ENCODE measurements at regions of chr6 and their contacts with region 1.

Region 1: GRCh38 chr6:3977875-3978711 is 100.8 kb downstream of the FAM217A start:
- DNase-seq: no peak
- H3K4me3 ChIP-seq: no peak overlapping the region
- H3K27ac ChIP-seq: no peak overlapping the region
- H3K4me1 ChIP-seq: peaks cover 0 to 1% (median 0%) of the 10 kb centered on the region in 4 experiments; a peak in 1 of 7 replicates
- H3K27me3 ChIP-seq: no peaks in the 10 kb centered on the region
- CTCF ChIP-seq: peak; percentile 25 to 65 (median 51)
- EP300 ChIP-seq: no peak
- POLR2A ChIP-seq: no peak
- RAD21 ChIP-seq: peak; percentile 60 to 63

Region 2: GRCh38 chr6:3742426-3743344 is 235.4 kb before region 1 on chr6:
- CTCF ChIA-PET with region 1: interaction called, 82 read pairs
- POLR2A ChIA-PET with region 1: interaction called, 3 read pairs
- DNase-seq: peak; percentile 60 to 98
- H3K4me3 ChIP-seq: no peak overlapping the region
- H3K27ac ChIP-seq: no peak overlapping the region
- H3K4me1 ChIP-seq: peaks cover 0 to 9% (median 4%) of the 10 kb centered on the region in 4 experiments; a peak in 5 of 7 replicates
- H3K27me3 ChIP-seq: peaks cover 0 to 2% (median 0%) of the 10 kb centered on the region in 4 experiments; a peak in 1 of 7 replicates
- CTCF ChIP-seq: peak in 2 of 3 experiments; percentile 91 to 94; a peak in 3 of 4 replicates
- EP300 ChIP-seq: no peak
- POLR2A ChIP-seq: no peak
- RAD21 ChIP-seq: peak; percentile 96 to 97

Region 3: DNA sequence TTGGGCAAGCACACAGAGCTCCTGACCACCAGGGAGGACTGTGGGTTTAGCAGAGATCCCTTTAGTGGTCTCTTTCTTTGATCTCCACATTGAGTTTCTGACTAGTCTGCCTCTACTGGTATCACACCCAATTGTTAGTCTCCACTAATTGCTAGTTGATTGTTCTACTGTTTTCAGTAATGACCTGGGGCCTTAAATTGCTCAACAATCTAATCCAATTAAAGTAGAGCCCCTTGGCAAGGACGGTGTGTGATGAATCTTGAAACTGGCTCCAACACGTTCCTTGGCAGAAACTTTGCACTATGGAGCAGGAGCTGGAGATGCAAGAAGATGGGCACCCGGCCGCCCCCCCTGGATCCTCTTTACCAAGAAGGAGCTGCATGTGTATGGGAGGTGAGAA is 116.7 kb before region 1 on chr6:
- CTCF ChIA-PET with region 1: interaction called, 11 read pairs
- POLR2A ChIA-PET with region 1: no interaction called
- DNase-seq: no peak
- H3K4me3 ChIP-seq: no peak overlapping the region
- H3K27ac ChIP-seq: no peak overlapping the region
- H3K4me1 ChIP-seq: peaks cover 0 to 4% (median 0%) of the 10 kb centered on the region in 4 experiments; a peak in 2 of 7 replicates
- H3K27me3 ChIP-seq: no peaks in the 10 kb centered on the region
- CTCF ChIP-seq: no peak
- EP300 ChIP-seq: no peak
- POLR2A ChIP-seq: no peak
- RAD21 ChIP-seq: no peak

Region 4: DNA sequence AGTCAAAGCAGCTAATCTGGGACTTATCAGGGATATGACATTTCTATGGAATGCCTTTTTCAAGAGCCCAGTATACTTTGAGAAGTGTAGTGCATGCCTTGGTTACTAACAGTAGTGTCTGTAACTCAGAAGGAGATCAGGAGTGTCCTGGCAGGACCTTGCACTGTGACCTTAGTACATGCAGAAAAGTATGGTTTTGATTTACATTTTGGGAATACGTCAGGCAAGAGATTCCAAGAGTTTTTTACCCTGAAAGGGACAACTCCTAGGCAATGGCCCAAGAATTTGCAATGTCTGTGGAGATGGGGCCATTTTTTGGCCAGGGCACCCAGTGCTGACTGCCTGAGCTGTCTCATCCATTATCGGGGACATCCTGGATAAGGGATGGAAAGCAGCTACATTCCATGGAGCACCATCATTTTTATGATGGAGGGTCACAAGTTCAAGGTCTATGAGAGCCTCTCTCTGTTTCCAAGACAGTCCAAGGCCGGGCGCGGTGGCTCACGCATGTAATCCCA is 48.8 kb before region 1 on chr6:
- CTCF ChIA-PET with region 1: interaction called, 25 read pairs
- POLR2A ChIA-PET with region 1: no interaction called
- DNase-seq: no peak
- H3K4me3 ChIP-seq: no peak overlapping the region
- H3K27ac ChIP-seq: no peak overlapping the region
- H3K4me1 ChIP-seq: no peaks in the 10 kb centered on the region
- H3K27me3 ChIP-seq: no peaks in the 10 kb centered on the region
- CTCF ChIP-seq: no peak
- EP300 ChIP-seq: no peak
- POLR2A ChIP-seq: no peak
- RAD21 ChIP-seq: no peak

Region 5: DNA sequence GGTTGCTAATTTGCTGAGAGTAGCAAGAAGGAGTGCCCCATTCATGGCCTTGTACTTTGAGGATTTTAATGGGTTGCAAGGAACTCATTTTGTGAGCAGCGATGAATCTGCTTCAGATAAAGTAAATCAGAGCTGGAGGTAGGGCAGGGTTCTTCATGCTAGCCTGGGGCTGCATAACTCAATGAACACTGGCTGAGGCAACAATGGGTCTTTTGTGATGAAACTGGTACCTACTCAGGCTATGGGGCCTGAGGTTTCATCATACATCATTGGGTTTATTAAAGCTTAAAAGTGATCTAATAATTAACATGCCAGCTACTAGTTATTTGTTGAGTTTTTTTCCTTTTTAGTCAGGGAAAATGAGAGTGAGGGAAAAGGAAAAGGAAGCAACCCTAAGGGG is 22.0 kb before region 1 on chr6:
- CTCF ChIA-PET with region 1: interaction called, 36 read pairs
- POLR2A ChIA-PET with region 1: interaction called, 3 read pairs
- DNase-seq: no peak
- H3K4me3 ChIP-seq: no peak overlapping the region
- H3K27ac ChIP-seq: no peak overlapping the region
- H3K4me1 ChIP-seq: no peaks in the 10 kb centered on the region
- H3K27me3 ChIP-seq: no peaks in the 10 kb centered on the region
- CTCF ChIP-seq: no peak
- EP300 ChIP-seq: no peak
- POLR2A ChIP-seq: no peak
- RAD21 ChIP-seq: no peak

Region 6: GRCh38 chr6:3990692-3991501 is 12.8 kb after region 1 on chr6:
- CTCF ChIA-PET with region 1: interaction called, 34 read pairs
- POLR2A ChIA-PET with region 1: interaction called, 3 read pairs
- DNase-seq: peak; percentile 73 to 93
- H3K4me3 ChIP-seq: no peak overlapping the region; a peak in 1 of 8 replicates
- H3K27ac ChIP-seq: no peak overlapping the region
- H3K4me1 ChIP-seq: peaks cover 2 to 14% (median 8%) of the 10 kb centered on the region in 4 experiments; a peak in 5 of 7 replicates
- H3K27me3 ChIP-seq: no peaks in the 10 kb centered on the region
- CTCF ChIP-seq: peak; percentile 91 to 98 (median 93)
- EP300 ChIP-seq: no peak
- POLR2A ChIP-seq: no peak
- RAD21 ChIP-seq: peak; percentile 90 to 96

Measured in H1 (cell line).